Astrocyte of the cerebellum (primary cell): ENCODE measurements at regions of chr1 and their contacts with region 1.

Region 1: GRCh38 chr1:232186931-232187330 is 443.0 kb downstream of the SIPA1L2 start:
- DNase-seq: no peak
- H3K4me3 ChIP-seq: no peak overlapping the region
- CTCF ChIP-seq: no peak

Region 2: GRCh38 chr1:232090816-232091215 is 96.1 kb before region 1 on chr1:
- in situ Hi-C with region 1: loop called (anchors 5 kb)
- DNase-seq: no peak
- H3K4me3 ChIP-seq: no peak overlapping the region
- CTCF ChIP-seq: no peak

Region 3: GRCh38 chr1:232134365-232134764 is 52.6 kb before region 1 on chr1:
- in situ Hi-C with region 1: no loop called
- DNase-seq: no peak
- H3K4me3 ChIP-seq: no peak overlapping the region
- CTCF ChIP-seq: no peak

Region 4: GRCh38 chr1:232226197-232226712 is 39.3 kb after region 1 on chr1:
- in situ Hi-C with region 1: loop called (anchors 5 kb)
- DNase-seq: peak; percentile 70
- H3K4me3 ChIP-seq: no peak overlapping the region
- CTCF ChIP-seq: no peak